BJ (cell line): ENCODE measurements at regions of chrX and their contacts with region 1.

Region 1: GRCh38 chrX:38166478-38167083 is 54.1 kb downstream of the SRPX start:
- DNase-seq: no peak
- H3K4me3 ChIP-seq: no peak overlapping the region
- H3K27me3 ChIP-seq: no peaks in the 10 kb centered on the region
- CTCF ChIP-seq: peak; percentile 33

Region 2: GRCh38 chrX:37926700-37927099 is 239.9 kb before region 1 on chrX:
- CTCF ChIA-PET with region 1: interaction called, 19 read pairs
- POLR2A ChIA-PET with region 1: no interaction called
- DNase-seq: no peak
- H3K4me3 ChIP-seq: no peak overlapping the region
- H3K27me3 ChIP-seq: no peaks in the 10 kb centered on the region
- CTCF ChIP-seq: peak; percentile 41